ENCODE measurements at regions of chr2 and their contacts with region 1.

Region 1: DNA sequence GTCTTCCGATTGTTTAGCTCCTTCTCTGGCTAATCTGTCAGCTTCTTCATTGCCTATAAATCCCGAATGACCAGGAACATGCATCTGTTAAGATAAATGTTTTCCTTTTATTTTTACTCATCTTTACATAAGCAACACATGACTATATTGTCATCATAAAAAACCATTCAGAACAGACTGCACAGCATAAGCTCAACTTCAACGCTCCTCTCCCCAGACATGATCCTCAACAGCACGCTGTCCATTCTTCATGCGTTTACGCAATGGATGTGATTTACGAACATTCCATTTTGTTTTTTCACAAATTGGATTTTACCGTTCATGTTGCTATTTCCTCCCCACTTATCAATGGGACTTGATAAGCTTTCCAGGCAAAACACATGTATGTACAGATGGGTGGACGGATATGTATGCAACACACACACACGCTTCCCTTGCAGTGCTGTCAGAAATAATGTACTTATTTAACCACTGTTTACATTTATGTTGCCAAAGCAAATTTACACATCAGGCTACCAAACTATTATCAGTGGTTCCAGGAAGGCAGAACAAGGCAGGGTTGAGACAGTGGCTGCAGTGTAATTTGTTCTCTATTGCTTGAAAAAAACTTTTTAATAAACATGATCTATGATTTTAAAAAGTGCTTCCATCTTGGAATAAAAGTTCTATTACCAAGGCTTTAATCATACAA is 12.2 kb downstream of the RNASEH1 start:
- DNase-seq: no peak
- H3K4me3 ChIP-seq: no peak overlapping the region
- H3K27ac ChIP-seq: no peak overlapping the region
- H3K4me1 ChIP-seq: no peaks in the 10 kb centered on the region
- H3K27me3 ChIP-seq: no peaks in the 10 kb centered on the region
- CTCF ChIP-seq: no peak

Region 2: DNA sequence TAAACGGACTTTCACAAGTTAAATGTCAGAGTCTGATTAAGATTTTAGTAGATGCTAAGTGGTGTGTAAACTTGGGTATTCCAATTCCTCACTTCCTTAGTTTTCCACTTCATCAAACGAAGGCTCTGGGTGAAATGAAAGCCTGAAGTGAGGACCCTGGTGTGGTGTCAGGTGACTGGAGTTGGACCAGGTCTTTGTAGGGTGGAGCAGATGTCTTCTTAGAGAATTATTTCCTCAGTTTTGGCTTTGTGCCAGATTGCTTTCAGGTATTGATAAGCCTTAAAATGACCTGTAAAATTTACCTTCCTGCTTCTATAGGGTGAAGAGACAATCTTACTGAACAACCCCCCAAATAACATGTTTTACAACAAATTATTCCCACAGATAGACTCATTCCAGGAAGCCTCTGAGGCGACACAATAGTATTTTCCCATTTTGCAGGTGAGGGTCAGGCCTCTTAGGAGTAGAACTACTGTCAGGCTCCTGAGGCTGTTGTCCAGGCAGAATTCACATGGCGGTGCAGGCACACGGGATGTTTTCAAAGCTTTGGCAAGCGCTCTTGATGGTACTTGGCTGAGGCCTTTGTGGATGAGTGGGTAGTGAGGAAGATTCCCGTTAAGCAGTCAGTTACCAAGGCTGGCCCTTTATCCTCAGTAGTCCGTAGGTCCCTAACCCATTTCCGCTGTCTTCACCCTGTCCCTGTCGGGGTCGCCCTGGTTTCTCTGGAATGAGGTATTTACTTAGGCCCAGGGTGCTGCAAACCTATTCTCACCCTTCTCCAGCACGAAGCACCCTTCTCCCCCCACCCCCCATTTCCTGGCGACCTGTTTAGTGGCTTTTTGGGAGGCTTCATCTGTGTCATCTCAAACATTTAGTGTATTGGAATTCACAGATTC is 35.7 kb after region 1 on chr2:
- CTCF ChIA-PET with region 1: no interaction called
- dilution Hi-C with region 1: loop called (anchors 5 kb)
- in situ Hi-C with region 1: no loop called
- intact Hi-C with region 1: no loop called
- DNase-seq: no peak
- H3K4me3 ChIP-seq: no peak overlapping the region
- H3K27ac ChIP-seq: no peak overlapping the region
- H3K4me1 ChIP-seq: peaks cover 22% of the 10 kb centered on the region
- H3K27me3 ChIP-seq: no peaks in the 10 kb centered on the region
- CTCF ChIP-seq: no peak

Region 3: GRCh38 chr2:3728104-3729054 is 182.4 kb after region 1 on chr2:
- CTCF ChIA-PET with region 1: no interaction called
- dilution Hi-C with region 1: no loop called
- in situ Hi-C with region 1: no loop called
- intact Hi-C with region 1: no loop called
- DNase-seq: peak; percentile 12
- H3K4me3 ChIP-seq: no peak overlapping the region
- H3K27ac ChIP-seq: no peak overlapping the region
- H3K4me1 ChIP-seq: no peaks in the 10 kb centered on the region
- H3K27me3 ChIP-seq: no peaks in the 10 kb centered on the region
- CTCF ChIP-seq: peak; percentile 41 to 51

Measured in mammary epithelial cell (primary cell).